Endothelial cell of umbilical vein (primary cell): ENCODE measurements at regions of chr7 and their contacts with region 1.

Region 1: GRCh38 chr7:4775250-4775847 is at the start of gene AP5Z1:
- DNase-seq: peak; percentile 94
- H3K4me3 ChIP-seq: peak within 1 kb of the TSS; percentile 44 to 71 (median 64)
- H3K27ac ChIP-seq: peak within 1 kb of the TSS; percentile 67
- H3K4me1 ChIP-seq: peaks cover 11% of the 10 kb centered on the region
- H3K27me3 ChIP-seq: no peaks in the 10 kb centered on the region
- CTCF ChIP-seq: no peak
- POLR2A ChIP-seq: peak; percentile 62
- total RNA-seq, gene AP5Z1: 58.9 and 64.3 TPM in 2 replicates

Region 2: GRCh38 chr7:4744391-4745264 is 30.7 kb before region 1 on chr7:
- CTCF ChIA-PET with region 1: interaction called, 3 read pairs
- POLR2A ChIA-PET with region 1: interaction called, 5 read pairs
- dilution Hi-C with region 1: no loop called
- intact Hi-C with region 1: loop called (anchors 2 kb)
- DNase-seq: peak; percentile 96
- H3K4me3 ChIP-seq: no peak overlapping the region
- H3K27ac ChIP-seq: peak overlapping the region; percentile 76
- H3K4me1 ChIP-seq: peaks cover 49% of the 10 kb centered on the region
- H3K27me3 ChIP-seq: no peaks in the 10 kb centered on the region
- CTCF ChIP-seq: no peak
- POLR2A ChIP-seq: no peak

Region 3: GRCh38 chr7:4791738-4792536 is 16.6 kb after region 1 on chr7:
- CTCF ChIA-PET with region 1: interaction called, 27 read pairs
- POLR2A ChIA-PET with region 1: interaction called, 4 read pairs
- dilution Hi-C with region 1: no loop called
- intact Hi-C with region 1: no loop called
- DNase-seq: peak; percentile 51
- H3K4me3 ChIP-seq: peak overlapping the region in 1 of 3 experiments; percentile 23
- H3K27ac ChIP-seq: no peak overlapping the region
- H3K4me1 ChIP-seq: no peaks in the 10 kb centered on the region
- H3K27me3 ChIP-seq: no peaks in the 10 kb centered on the region
- CTCF ChIP-seq: peak; percentile 62 to 88
- POLR2A ChIP-seq: no peak